OCI-LY7 (cell line): ENCODE measurements at regions of chr3 and their contacts with region 1.

Region 1: GRCh38 chr3:185764163-185764979 is 60.5 kb downstream of the IGF2BP2 start:
- DNase-seq: no peak
- H3K4me3 ChIP-seq: no peak overlapping the region
- H3K27ac ChIP-seq: no peak overlapping the region
- H3K4me1 ChIP-seq: no peaks in the 10 kb centered on the region
- CTCF ChIP-seq: no peak

Region 2: DNA sequence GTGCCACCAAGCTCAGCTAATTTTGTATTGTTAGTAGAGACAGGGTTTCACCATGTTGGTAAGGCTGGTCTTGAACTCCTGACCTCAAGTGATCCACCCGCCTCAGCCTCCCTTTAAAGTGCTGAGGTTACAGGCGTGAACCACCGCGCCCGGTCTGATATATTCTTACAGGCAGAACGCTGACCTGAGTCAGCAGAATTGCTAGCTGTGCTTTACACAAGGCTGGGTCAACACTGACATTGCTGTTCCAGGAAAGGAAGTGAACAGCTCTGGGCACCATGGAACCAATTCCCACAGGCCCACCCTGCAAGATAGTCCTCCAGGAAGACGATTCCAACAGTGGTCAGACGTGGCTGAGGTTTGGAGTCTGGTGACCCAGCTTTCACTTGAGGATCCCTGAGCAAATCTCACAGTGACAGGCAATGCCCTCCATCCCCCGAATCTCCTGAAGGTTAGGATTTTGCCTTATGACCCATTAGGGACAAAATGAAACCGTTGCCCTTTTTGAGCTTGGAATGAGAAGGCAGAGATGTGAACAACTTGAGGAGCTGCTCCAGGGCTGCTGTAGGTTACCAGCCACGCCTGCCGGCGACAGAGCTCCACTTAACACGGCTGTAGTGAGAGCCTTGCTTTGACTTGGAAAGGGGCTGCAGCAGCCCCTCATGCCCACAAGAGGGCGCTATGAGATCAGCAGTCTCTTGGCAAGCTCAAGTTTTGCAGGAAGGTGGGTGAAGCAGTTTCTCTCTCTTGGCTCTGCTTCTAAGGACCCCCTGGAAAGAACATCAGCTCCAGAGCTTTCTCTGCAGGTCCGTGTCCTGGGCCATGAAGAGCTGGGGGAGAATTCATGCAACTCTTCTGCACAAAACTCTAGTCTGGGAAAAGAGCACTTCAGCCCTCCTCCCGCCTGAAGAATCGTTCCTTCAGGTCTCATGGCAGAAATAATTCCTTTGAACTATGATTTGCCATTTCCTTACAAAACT is 104.1 kb before region 1 on chr3:
- CTCF ChIA-PET with region 1: interaction called, 4 read pairs
- POLR2A ChIA-PET with region 1: no interaction called
- intact Hi-C with region 1: loop called (anchors 1 kb)
- DNase-seq: peak; percentile 76
- H3K4me3 ChIP-seq: no peak overlapping the region
- H3K27ac ChIP-seq: no peak overlapping the region
- H3K4me1 ChIP-seq: no peaks in the 10 kb centered on the region
- CTCF ChIP-seq: peak; percentile 98

Region 3: GRCh38 chr3:185677146-185677829 is 87.1 kb before region 1 on chr3:
- CTCF ChIA-PET with region 1: no interaction called
- POLR2A ChIA-PET with region 1: no interaction called
- intact Hi-C with region 1: loop called (anchors 5 kb)
- DNase-seq: peak; percentile 40
- H3K4me3 ChIP-seq: no peak overlapping the region
- H3K27ac ChIP-seq: no peak overlapping the region
- H3K4me1 ChIP-seq: no peaks in the 10 kb centered on the region
- CTCF ChIP-seq: peak; percentile 76

Region 4: DNA sequence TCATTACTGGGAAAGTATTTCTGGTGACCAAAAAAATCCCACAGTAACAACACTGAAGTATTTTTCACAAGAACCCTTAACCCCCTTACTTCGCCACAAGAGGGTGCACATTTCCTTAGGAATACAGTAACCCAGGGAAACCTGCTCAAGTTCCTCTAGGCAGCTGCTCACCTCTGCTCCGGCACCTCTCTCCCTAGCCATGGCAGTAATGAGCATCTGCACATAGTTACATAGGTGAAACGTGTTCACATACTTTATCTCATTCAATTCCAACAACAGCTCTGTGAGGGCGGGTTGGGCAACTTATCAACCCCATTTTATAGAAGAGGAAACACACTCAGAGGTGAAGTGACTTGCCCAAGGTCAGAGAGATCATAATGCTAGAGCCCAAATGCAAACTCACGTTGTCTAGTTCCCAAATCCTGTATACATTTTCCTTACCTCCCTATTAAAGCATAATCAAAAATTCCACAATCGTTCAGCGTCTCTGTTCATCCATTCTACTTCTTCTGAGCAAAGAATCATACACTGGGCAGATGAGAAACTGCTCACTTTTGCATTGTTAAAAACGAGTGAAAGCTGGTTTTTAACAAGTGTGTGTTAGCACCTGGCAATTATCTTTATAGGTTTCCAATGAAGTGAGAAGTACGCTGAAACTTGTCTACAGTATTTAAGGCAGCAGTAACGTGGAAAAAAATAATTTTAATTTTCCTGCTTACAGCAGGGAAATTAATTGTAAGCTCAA is 30.2 kb before region 1 on chr3:
- CTCF ChIA-PET with region 1: no interaction called
- POLR2A ChIA-PET with region 1: no interaction called
- intact Hi-C with region 1: loop called (anchors 2 kb)
- DNase-seq: peak; percentile 52
- H3K4me3 ChIP-seq: no peak overlapping the region
- H3K27ac ChIP-seq: no peak overlapping the region
- H3K4me1 ChIP-seq: no peaks in the 10 kb centered on the region
- CTCF ChIP-seq: peak; percentile 76

Region 5: DNA sequence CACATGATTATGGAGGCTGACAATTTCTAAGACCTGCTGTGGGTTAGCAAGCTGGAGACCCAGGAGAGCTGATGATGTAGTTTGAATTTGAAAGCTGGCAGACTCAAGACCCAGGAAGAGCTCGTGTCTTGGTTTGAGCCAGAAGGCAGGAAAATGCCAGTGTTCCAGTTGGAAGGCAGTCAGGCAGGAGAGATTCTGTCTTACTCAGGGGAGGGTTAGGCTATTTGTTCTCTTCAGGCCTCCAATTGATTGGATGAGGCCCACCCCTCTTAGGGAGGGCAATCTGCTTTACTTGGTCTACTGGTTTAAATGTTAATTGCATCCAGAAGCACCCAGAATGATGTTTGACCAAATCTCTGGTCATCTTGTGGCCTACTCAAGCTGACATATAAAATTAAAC is 100.9 kb after region 1 on chr3:
- CTCF ChIA-PET with region 1: no interaction called
- POLR2A ChIA-PET with region 1: no interaction called
- intact Hi-C with region 1: no loop called
- DNase-seq: no peak
- H3K4me3 ChIP-seq: no peak overlapping the region
- H3K27ac ChIP-seq: no peak overlapping the region
- H3K4me1 ChIP-seq: no peaks in the 10 kb centered on the region
- CTCF ChIP-seq: no peak

Region 6: DNA sequence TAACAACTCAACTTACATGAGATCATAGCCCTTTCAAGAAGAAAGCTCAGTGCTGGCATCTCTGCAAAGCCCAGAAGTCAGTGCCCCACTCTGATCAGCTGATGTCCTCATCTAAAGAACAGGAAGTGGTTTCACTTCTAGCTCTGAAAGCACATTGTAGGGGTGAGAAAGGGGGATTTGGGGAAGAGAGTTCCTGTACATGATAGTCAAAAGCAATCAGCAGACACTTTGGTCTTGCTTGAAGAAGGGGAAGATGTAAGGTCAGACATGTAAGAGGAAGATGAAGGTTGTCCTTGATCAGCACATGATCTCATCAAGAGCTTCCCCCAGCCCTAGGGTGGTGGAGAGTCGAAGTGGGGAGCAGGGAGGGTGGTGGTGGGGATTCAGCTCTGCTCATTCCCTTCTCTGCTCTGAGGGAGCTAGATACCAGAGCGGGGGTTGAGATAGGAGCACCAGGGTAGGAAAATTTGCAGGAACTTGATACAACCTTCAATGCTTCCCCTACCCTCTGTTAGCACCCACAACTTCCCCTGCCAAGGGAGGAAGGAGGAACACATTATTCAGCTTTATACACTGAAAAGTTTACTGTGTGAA is 420.9 kb after region 1 on chr3:
- CTCF ChIA-PET with region 1: no interaction called
- POLR2A ChIA-PET with region 1: no interaction called
- intact Hi-C with region 1: no loop called
- DNase-seq: peak; percentile 65
- H3K4me3 ChIP-seq: no peak overlapping the region
- H3K27ac ChIP-seq: no peak overlapping the region
- H3K4me1 ChIP-seq: peaks cover 12% of the 10 kb centered on the region
- CTCF ChIP-seq: no peak